T-cell (primary cell): ENCODE measurements at regions of chr12 and their contacts with region 1.

Region 1: DNA sequence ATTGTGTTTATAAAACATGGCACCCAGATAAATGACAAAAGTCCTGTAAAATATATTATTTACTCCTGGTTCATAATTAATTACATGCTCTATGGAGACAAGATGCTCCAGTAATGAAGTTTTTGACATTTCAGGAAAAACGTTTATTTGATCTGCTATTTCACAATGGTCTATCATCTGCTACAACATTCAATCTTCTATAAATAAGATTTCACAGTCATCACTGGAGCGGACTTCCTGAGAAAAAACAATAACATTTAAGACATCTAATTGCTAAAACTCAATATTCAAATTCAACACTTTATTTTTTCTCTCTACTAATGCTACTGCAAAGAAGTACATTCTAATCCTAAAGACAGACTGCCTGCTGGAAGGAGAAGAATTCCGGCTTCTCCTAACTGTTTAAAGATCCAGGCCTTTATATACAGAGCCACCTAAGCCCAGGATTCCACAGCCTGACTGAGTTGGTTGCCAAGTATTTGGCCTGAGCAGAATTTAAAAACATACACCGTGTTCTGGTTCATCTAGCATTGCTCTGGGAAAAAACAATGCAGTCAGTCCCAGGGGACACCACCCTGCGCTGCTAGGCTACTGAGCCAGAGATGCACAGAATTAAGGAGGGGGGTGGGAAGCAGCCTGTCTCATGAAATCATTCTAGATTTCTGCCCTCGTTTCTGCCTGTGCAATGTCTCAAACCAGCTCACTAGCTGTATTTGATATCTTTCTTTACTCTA is 58.0 kb downstream of the TMTC1 start:
- DNase-seq: no peak
- ATAC-seq: no peak
- H3K4me3 ChIP-seq: no peak overlapping the region
- H3K4me3 Mint-ChIP-seq: no peak overlapping the region
- H3K27ac ChIP-seq: no peak overlapping the region
- H3K27ac Mint-ChIP-seq: no peak overlapping the region
- H3K4me1 ChIP-seq: no peaks in the 10 kb centered on the region
- H3K4me1 Mint-ChIP-seq: no peaks in the 10 kb centered on the region
- H3K27me3 ChIP-seq: peaks cover 0 to 2% of the 10 kb centered on the region in 2 experiments
- H3K27me3 Mint-ChIP-seq: peaks cover 0 to 12% of the 10 kb centered on the region in 2 donors

Region 2: GRCh38 chr12:29698756-29699155 is 27.0 kb before region 1 on chr12:
- CTCF ChIA-PET with region 1: no interaction called
- POLR2A ChIA-PET with region 1: no interaction called
- DNase-seq: no peak
- ATAC-seq: no peak
- H3K4me3 ChIP-seq: no peak overlapping the region
- H3K4me3 Mint-ChIP-seq: no peak overlapping the region
- H3K27ac ChIP-seq: no peak overlapping the region
- H3K27ac Mint-ChIP-seq: no peak overlapping the region
- H3K4me1 ChIP-seq: no peaks in the 10 kb centered on the region
- H3K4me1 Mint-ChIP-seq: no peaks in the 10 kb centered on the region
- H3K27me3 ChIP-seq: peaks cover 0 to 4% of the 10 kb centered on the region in 2 experiments
- H3K27me3 Mint-ChIP-seq: peaks cover 0 to 2% of the 10 kb centered on the region in 2 donors

Region 3: DNA sequence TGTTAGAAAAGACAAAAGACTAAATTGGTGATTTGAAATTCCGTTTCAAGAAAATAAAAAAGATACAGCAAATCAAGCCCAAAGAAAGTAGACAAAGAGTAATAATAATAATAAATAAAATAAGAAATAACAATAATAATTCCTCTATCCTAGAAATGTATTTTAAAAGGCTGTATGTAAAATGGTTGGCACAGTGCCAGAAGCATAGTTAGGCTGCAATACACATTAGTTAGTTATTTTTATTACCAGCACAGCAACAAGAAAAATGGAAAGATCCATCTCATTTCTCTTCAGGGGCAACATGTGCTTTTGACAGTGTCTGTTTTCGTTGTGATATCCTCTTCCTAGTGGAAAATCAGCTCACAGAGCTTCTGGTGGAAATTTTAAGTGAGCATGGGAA is 232.1 kb after region 1 on chr12:
- CTCF ChIA-PET with region 1: no interaction called
- POLR2A ChIA-PET with region 1: interaction called in 1 of 2 experiments, 10 read pairs
- DNase-seq: peak in 1 of 35 experiments; percentile 1
- ATAC-seq: no peak
- H3K4me3 ChIP-seq: no peak overlapping the region
- H3K4me3 Mint-ChIP-seq: no peak overlapping the region
- H3K27ac ChIP-seq: no peak overlapping the region
- H3K27ac Mint-ChIP-seq: no peak overlapping the region
- H3K4me1 ChIP-seq: no peaks in the 10 kb centered on the region
- H3K4me1 Mint-ChIP-seq: no peaks in the 10 kb centered on the region
- H3K27me3 ChIP-seq: no peaks in the 10 kb centered on the region
- H3K27me3 Mint-ChIP-seq: no peaks in the 10 kb centered on the region

Region 4: GRCh38 chr12:29970501-29970900 is 244.7 kb after region 1 on chr12:
- CTCF ChIA-PET with region 1: no interaction called
- POLR2A ChIA-PET with region 1: interaction called in 1 of 2 experiments, 11 read pairs
- DNase-seq: no peak
- ATAC-seq: no peak
- H3K4me3 ChIP-seq: no peak overlapping the region
- H3K4me3 Mint-ChIP-seq: no peak overlapping the region
- H3K27ac ChIP-seq: no peak overlapping the region
- H3K27ac Mint-ChIP-seq: no peak overlapping the region
- H3K4me1 ChIP-seq: no peaks in the 10 kb centered on the region
- H3K4me1 Mint-ChIP-seq: no peaks in the 10 kb centered on the region
- H3K27me3 ChIP-seq: no peaks in the 10 kb centered on the region
- H3K27me3 Mint-ChIP-seq: no peaks in the 10 kb centered on the region